Panc1 (cell line): ENCODE measurements at regions of chr16 and their contacts with region 1.

Region 1: GRCh38 chr16:56057151-56057550 is 134.1 kb upstream of the GNAO1 start:
- DNase-seq: no peak
- ATAC-seq: no peak
- H3K4me3 ChIP-seq: no peak overlapping the region
- H3K27ac ChIP-seq: no peak overlapping the region
- H3K4me1 ChIP-seq: no peaks in the 10 kb centered on the region
- H3K27me3 ChIP-seq: peaks cover 2% of the 10 kb centered on the region; the same call in 1 of the 2 replicates
- CTCF ChIP-seq: no peak

Region 2: DNA sequence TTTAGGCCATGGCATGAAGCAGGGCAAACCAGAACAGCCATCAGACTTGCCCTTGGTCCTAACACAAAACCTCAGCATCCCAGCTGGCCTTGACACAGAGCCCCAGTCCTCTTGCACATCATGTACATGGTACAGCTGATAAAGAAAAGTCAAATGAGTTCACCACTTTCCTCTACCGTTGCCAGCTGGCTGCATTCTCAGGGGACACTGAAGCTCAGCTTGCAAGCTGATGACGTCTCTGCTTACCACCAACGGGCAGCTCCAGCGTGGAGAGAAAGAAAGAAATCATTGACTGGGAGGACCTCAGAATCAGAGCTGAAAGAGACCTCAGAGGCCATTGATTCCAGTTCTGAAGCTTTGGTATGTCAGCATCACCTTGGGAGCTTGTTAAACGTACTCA is 101.3 kb before region 1 on chr16:
- CTCF ChIA-PET with region 1: no interaction called
- POLR2A ChIA-PET with region 1: no interaction called
- in situ Hi-C with region 1: no loop called
- intact Hi-C with region 1: no loop called
- DNase-seq: no peak
- ATAC-seq: no peak
- H3K4me3 ChIP-seq: no peak overlapping the region
- H3K27ac ChIP-seq: no peak overlapping the region
- H3K4me1 ChIP-seq: no peaks in the 10 kb centered on the region
- H3K27me3 ChIP-seq: no peaks in the 10 kb centered on the region
- CTCF ChIP-seq: no peak

Region 3: DNA sequence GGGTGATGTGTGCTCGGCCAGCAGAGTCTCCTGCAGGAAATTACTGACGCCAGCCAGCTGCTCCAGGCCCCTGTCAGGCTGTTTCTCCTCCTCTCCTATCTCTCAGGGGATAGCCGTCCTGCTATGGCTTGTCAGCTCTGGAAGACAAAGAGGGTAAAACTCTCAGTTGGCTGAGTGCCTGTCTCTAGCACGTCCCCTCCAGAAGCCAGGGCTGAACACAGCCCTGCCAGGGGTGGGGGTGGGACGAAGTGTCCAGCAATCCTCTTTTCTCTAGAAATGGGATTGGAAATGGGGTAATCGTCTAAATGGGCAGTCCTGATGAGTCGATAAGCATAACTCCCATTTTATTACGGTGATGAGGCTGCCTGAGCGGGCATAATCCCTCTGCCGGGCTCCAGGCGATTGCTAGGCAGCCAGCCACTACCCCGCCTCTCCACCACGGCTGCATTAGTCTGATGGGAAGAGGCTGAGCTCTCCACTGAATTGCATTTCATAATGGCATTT is 45.1 kb after region 1 on chr16:
- CTCF ChIA-PET with region 1: no interaction called
- POLR2A ChIA-PET with region 1: no interaction called
- in situ Hi-C with region 1: no loop called
- intact Hi-C with region 1: no loop called
- DNase-seq: no peak
- ATAC-seq: no peak
- H3K4me3 ChIP-seq: no peak overlapping the region
- H3K27ac ChIP-seq: no peak overlapping the region
- H3K4me1 ChIP-seq: peaks cover 4% of the 10 kb centered on the region; the same call in 1 of the 2 replicates
- H3K27me3 ChIP-seq: no peaks in the 10 kb centered on the region
- CTCF ChIP-seq: no peak

Region 4: DNA sequence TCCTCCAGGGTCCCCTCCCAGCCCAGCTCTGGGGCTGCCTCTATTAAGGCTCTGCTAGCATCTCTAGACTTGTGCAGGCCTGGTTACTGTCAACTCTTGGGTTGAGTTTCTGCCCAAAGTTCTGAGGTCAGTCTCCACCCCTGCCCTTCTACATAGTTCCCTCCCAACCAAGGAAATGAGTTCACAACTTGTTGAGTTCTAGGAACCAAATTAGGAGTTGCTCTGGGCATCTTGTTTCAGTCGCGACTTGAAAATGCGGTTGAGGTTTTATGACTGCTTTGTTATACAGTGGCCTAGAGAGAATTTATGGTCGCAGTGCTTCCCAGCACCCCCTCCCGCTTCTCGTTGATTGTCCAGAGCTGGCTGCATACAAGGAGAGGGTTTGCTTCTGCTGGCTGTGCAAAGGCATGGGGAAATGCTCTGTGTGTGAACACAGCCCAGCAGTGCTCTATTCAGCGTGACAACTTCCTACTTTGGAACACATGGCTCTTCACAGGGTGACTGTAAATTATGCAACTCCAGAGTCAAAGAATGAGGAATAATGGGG is 154.4 kb after region 1 on chr16:
- CTCF ChIA-PET with region 1: no interaction called
- POLR2A ChIA-PET with region 1: no interaction called
- in situ Hi-C with region 1: no loop called
- intact Hi-C with region 1: no loop called
- DNase-seq: no peak
- ATAC-seq: no peak
- H3K4me3 ChIP-seq: no peak overlapping the region
- H3K27ac ChIP-seq: no peak overlapping the region
- H3K4me1 ChIP-seq: no peaks in the 10 kb centered on the region; the same call in 1 of the 2 replicates
- H3K27me3 ChIP-seq: no peaks in the 10 kb centered on the region
- CTCF ChIP-seq: no peak

Region 5: DNA sequence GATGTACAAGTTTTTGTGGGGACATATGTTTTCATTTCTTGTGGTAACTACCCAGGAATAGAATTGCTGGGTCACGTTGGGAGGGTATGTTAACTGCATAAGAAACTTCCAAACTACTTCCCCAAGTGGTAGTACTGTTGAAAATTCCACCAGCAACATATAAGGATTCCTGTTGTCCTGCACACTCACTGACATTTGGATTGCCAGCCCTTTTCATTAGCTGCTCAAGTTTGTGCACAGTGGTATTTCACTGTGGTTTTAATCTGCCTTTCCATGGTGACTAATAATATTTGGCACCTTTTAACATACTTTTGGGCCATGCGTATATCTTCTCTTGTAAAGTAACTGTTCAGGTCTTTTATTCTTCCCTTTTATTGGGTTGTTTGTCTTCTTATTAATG is 237.4 kb after region 1 on chr16:
- CTCF ChIA-PET with region 1: no interaction called
- POLR2A ChIA-PET with region 1: no interaction called
- in situ Hi-C with region 1: no loop called
- intact Hi-C with region 1: loop called (anchors 10 kb)
- DNase-seq: no peak
- ATAC-seq: no peak
- H3K4me3 ChIP-seq: no peak overlapping the region
- H3K27ac ChIP-seq: no peak overlapping the region
- H3K4me1 ChIP-seq: no peaks in the 10 kb centered on the region
- H3K27me3 ChIP-seq: no peaks in the 10 kb centered on the region
- CTCF ChIP-seq: no peak